ENCODE measurements at regions of chr3 and their contacts with region 1.

Region 1: GRCh38 chr3:179147873-179148615 is at the start of gene PIK3CA:
- DNase-seq: peak; percentile 87 to 97
- ATAC-seq: peak; percentile 96 to 99 (median 98)
- H3K4me3 ChIP-seq: peak within 1 kb of the TSS; percentile 75 to 97 (median 88)
- H3K27ac ChIP-seq: peak within 1 kb of the TSS; percentile 94 to 99 (median 98)
- H3K4me1 ChIP-seq: peaks cover 2 to 40% (median 34%) of the 10 kb centered on the region in 9 donors
- H3K27me3 ChIP-seq: no peaks in the 10 kb centered on the region
- CTCF ChIP-seq: no peak
- total RNA-seq, gene PIK3CA: 17.5 to 35.3 (median 24.4) TPM

Region 2: DNA sequence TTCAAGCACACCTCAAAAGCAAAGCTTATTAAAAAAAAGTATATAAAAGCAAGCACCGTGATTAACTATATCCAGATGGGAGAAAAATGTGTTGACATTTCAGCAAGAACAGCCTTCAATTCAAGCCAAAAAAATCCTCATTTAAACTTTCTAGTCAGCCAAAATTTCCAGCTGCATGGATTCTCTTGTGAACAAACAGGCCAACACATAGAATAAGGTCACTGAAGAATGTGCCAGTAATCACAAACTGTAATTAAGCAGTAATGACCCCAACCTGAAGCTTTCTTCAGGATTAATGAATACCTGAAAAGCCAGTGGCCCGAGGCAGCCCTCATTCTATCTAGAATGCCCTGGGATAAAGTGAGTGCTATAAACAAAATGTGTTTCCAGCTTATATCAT is 742.5 kb before region 1 on chr3:
- intact Hi-C with region 1: no loop called
- DNase-seq: no peak
- ATAC-seq: peak in 1 of 8 donors; percentile 31
- H3K4me3 ChIP-seq: no peak overlapping the region
- H3K27ac ChIP-seq: no peak overlapping the region
- H3K4me1 ChIP-seq: peaks cover 0 to 13% (median 0%) of the 10 kb centered on the region in 9 donors
- H3K27me3 ChIP-seq: no peaks in the 10 kb centered on the region
- CTCF ChIP-seq: no peak

Region 3: DNA sequence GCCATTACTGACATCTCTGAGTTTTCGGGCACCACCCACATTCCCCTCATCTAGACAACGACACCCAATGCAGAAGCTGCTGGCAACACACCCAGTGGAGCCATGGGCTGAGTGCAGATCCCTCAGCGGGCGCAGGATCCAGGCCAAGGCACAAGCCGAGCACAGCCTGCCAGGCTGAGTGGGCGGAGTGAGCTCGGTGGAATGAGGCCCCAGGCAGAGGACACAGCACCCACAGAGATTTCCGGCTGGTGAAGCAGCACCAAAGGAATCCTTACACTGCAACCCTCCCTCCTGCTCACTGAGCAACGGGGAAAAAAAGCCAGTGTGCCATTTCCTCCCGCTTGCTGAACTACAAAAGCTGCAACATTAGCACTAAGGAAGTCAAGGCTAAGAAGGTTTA is 110.7 kb before region 1 on chr3:
- intact Hi-C with region 1: no loop called
- DNase-seq: peak; percentile 58
- ATAC-seq: peak; percentile 71 to 98 (median 91)
- H3K4me3 ChIP-seq: no peak overlapping the region
- H3K27ac ChIP-seq: peak overlapping the region in 3 of 10 donors; percentile 13 to 41 (median 15)
- H3K4me1 ChIP-seq: peaks cover 0 to 43% (median 13%) of the 10 kb centered on the region in 9 donors
- H3K27me3 ChIP-seq: no peaks in the 10 kb centered on the region
- CTCF ChIP-seq: no peak

Region 4: DNA sequence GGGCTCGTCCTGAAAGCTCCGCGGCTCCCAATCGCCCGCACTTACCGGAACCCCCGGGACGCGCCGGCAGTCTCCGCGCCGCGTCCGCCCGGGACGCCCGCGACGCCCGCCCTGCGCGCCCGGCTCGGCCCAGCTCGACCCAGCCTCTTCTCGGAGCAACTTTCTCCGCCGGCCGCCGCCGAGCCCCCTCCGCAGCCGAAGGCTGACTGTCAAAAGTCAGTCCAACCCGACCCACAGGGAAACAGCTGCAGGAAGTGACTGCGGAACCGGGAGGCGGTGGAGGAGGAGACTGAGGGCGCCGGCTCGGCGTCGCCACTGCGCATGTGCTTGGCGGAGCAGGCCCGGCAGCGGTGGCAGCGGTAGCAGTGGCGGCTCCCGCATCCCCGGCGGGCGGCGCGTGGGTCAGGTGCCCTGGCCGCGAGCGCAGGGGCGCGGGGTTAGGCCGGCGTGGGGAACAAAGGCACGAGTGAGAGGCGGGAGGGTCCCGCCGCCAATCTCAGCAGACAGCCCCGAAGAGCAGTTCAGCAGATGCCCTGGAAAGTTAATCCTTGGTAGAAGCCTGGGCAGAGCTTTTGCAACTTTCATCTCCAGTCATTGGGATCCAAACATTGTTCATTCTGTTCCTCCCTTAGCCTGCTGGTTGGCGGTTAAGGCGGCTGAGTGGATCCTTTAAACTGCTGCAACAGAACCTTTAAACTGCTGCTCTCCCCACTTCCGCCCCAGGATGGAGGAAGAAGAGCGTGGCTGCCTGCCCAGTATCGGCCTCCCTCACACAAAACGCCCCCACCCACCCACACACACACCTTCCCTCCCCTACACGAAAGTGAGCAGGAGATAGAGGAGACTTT is 76.3 kb before region 1 on chr3 and contains the start of gene ZMAT3:
- intact Hi-C with region 1: loop called in 1 of 10 experiments (anchors 5 kb)
- DNase-seq: peak; percentile 90 to 91
- ATAC-seq: peak; percentile 97 to 99 (median 98)
- H3K4me3 ChIP-seq: peak within 1 kb of the TSS; percentile 64 to 92 (median 77)
- H3K27ac ChIP-seq: peak within 1 kb of the TSS; percentile 53 to 97 (median 90)
- H3K4me1 ChIP-seq: peaks cover 0 to 44% (median 25%) of the 10 kb centered on the region in 9 donors
- H3K27me3 ChIP-seq: no peaks in the 10 kb centered on the region
- CTCF ChIP-seq: no peak
- total RNA-seq, gene ZMAT3: 10.1 to 18.2 (median 13.1) TPM

Region 5: DNA sequence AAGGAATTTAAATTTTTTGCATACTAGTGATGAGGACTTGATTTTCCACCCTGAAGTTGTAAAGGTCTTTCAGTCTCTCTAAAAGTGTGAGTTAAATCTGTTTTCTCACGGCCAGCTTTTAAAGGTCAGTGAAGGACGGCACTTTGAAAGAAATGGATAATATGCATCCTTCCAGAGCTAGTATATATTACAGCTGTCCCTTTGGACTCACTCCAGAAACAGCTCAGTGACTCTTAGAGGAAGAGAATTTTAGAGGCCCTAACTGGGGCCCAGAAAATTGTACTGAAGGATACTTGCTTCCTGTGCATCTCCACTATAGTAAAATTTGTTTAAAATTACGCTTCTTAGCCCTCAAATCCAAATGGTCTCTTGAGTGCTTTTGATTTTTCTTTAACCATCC is 41.7 kb after region 1 on chr3:
- intact Hi-C with region 1: loop called in 4 of 10 experiments (anchors 5 kb)
- DNase-seq: peak in 1 of 2 donors; percentile 34
- ATAC-seq: peak in 4 of 8 donors; percentile 65 to 74 (median 70)
- H3K4me3 ChIP-seq: no peak overlapping the region
- H3K27ac ChIP-seq: peak overlapping the region in 5 of 10 donors; percentile 8 to 48 (median 19)
- H3K4me1 ChIP-seq: peaks cover 2 to 74% (median 45%) of the 10 kb centered on the region in 9 donors
- H3K27me3 ChIP-seq: no peaks in the 10 kb centered on the region
- CTCF ChIP-seq: no peak

Region 6: GRCh38 chr3:179260949-179261765 is 113.1 kb after region 1 on chr3:
- intact Hi-C with region 1: loop called in 2 of 10 experiments (anchors 2 to 5 kb)
- DNase-seq: peak; percentile 67 to 83
- ATAC-seq: peak; percentile 96 to 100 (median 98)
- H3K4me3 ChIP-seq: peak overlapping the region; percentile 26 to 81 (median 66)
- H3K27ac ChIP-seq: peak overlapping the region in 9 of 10 donors; percentile 46 to 88 (median 75)
- H3K4me1 ChIP-seq: peaks cover 0 to 12% (median 5%) of the 10 kb centered on the region in 9 donors
- H3K27me3 ChIP-seq: no peaks in the 10 kb centered on the region
- CTCF ChIP-seq: peak in 1 of 9 donors; percentile 2

Region 7: GRCh38 chr3:179322286-179323196 is 174.5 kb after region 1 on chr3 and contains the start of gene ZNF639:
- intact Hi-C with region 1: loop called in 7 of 10 experiments (anchors 2 to 5 kb)
- DNase-seq: peak; percentile 80 to 88
- ATAC-seq: peak; percentile 87 to 95 (median 92)
- H3K4me3 ChIP-seq: peak within 1 kb of the TSS; percentile 82 to 99 (median 90)
- H3K27ac ChIP-seq: peak within 1 kb of the TSS; percentile 93 to 99 (median 97)
- H3K4me1 ChIP-seq: peaks cover 3 to 54% (median 31%) of the 10 kb centered on the region in 9 donors
- H3K27me3 ChIP-seq: no peaks in the 10 kb centered on the region
- CTCF ChIP-seq: peak; percentile 82 to 95 (median 86)
- total RNA-seq, gene ZNF639: 25.8 to 41.0 (median 30.6) TPM